ENCODE measurements at regions of chr13 and their contacts with region 1.

Region 1: DNA sequence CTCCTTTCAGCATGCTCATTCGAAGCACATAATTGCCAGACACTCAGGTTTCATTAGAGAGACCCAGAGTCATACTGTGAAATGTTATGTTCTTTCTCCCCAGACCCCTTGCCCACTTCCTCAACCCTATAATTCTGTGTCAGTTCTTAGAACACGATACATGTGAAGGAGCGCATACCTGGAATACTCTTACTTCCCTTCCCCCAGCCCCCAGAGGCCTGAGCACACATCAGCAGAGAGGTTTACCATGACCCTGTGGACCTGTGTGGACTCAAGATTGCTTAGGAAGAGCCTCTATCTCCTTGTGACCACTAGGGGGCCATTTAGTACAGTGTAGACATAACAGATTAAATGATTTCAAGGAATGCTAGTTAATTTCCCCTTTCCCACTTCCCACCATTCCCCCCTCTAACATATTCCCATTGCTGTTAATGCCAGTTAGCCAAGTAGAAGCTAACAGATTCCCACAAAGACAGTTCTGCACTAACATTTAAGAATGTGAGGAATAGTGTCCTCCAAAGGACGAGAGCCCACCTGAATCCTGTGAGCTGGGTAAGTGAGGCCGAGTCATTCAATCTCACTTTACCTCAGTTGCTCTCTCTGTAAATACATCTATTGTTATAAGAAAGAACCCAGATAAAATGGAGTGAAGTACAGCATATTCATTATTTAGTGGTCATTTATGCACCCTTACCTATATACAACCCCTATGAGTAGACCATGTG is 154.2 kb upstream of the MAB21L1 start:
- DNase-seq: peak; percentile 9
- H3K4me3 Mint-ChIP-seq: no peak overlapping the region
- H3K27ac Mint-ChIP-seq: no peak overlapping the region
- H3K4me1 Mint-ChIP-seq: no peaks in the 10 kb centered on the region
- H3K27me3 Mint-ChIP-seq: no peaks in the 10 kb centered on the region
- CTCF ChIP-seq: peak; percentile 40

Region 2: DNA sequence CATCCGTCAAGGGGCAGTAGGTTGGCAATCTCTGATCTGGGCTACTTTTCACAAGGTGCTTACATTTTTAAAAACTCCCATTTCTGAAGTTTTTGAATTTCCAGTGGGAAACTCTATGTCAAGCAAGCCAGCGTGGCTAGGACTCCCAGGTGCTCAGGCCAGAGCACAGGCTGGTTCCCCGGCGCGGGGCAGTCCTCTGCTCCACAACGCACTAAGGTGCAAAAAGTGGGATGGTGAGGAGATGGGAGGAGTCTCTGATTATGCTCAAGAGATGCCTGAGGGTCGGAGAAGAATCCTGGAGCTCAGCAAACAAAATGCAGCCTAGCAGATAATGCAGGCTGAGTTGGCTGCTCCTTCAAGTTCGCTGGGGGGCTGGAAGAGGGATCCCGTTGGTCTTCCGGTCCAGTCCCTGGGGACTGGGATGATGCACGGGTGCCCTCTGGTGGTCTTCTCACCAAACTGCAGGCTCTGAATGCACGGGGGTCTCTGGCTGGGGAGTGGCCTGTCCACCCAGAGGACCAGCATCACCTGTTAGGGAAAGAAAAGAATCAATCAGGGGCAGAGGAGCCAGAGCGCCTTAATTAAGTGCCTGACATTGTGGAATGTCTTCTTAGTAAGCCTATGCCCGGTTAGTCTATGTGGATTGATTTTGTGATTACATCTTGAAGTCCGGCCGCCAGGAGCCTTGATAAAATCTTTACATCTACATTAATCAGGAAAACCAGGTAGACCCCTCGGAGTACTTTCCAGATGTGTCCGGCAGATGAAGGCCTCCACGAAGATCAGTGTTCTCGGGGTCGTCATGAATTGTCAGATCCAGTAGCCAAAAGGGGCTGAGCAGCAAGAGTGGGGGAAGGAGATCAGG is 90.2 kb after region 1 on chr13:
- CTCF ChIA-PET with region 1: no interaction called
- intact Hi-C with region 1: loop called (anchors 1 kb)
- DNase-seq: peak; percentile 58
- H3K4me3 Mint-ChIP-seq: peak overlapping the region; percentile 59
- H3K27ac Mint-ChIP-seq: no peak overlapping the region
- H3K4me1 Mint-ChIP-seq: peaks cover 14% of the 10 kb centered on the region
- H3K27me3 Mint-ChIP-seq: peaks cover 29% of the 10 kb centered on the region
- CTCF ChIP-seq: peak; percentile 92

Region 3: GRCh38 chr13:35789335-35790165 is 158.8 kb after region 1 on chr13:
- CTCF ChIA-PET with region 1: no interaction called
- intact Hi-C with region 1: loop called (anchors 10 kb)
- DNase-seq: no peak
- H3K4me3 Mint-ChIP-seq: no peak overlapping the region
- H3K27ac Mint-ChIP-seq: no peak overlapping the region
- H3K4me1 Mint-ChIP-seq: no peaks in the 10 kb centered on the region
- H3K27me3 Mint-ChIP-seq: no peaks in the 10 kb centered on the region
- CTCF ChIP-seq: no peak

Measured in Calu3 (cell line).